H1 (cell line): ENCODE measurements at regions of chr2 and their contacts with region 1.

Region 1: GRCh38 chr2:126634273-126634861 is 21.6 kb upstream of the GYPC start:
- DNase-seq: peak in 1 of 2 experiments; percentile 53
- H3K4me3 ChIP-seq: no peak overlapping the region
- H3K27ac ChIP-seq: no peak overlapping the region
- H3K4me1 ChIP-seq: no peaks in the 10 kb centered on the region
- H3K27me3 ChIP-seq: no peaks in the 10 kb centered on the region; a peak in 1 of 7 replicates
- CTCF ChIP-seq: peak; percentile 31 to 60 (median 49)
- EP300 ChIP-seq: no peak
- POLR2A ChIP-seq: no peak
- RAD21 ChIP-seq: peak; percentile 37 to 55; a peak in 3 of 4 replicates

Region 2: GRCh38 chr2:126527836-126528507 is 106.4 kb before region 1 on chr2:
- CTCF ChIA-PET with region 1: interaction called, 19 read pairs
- POLR2A ChIA-PET with region 1: no interaction called
- DNase-seq: peak; percentile 39 to 79
- H3K4me3 ChIP-seq: no peak overlapping the region
- H3K27ac ChIP-seq: no peak overlapping the region
- H3K4me1 ChIP-seq: no peaks in the 10 kb centered on the region
- H3K27me3 ChIP-seq: no peaks in the 10 kb centered on the region
- CTCF ChIP-seq: peak; percentile 74 to 88 (median 85)
- EP300 ChIP-seq: no peak
- POLR2A ChIP-seq: no peak
- RAD21 ChIP-seq: peak; percentile 87 to 88

Region 3: GRCh38 chr2:126644630-126645191 is 10.3 kb after region 1 on chr2:
- CTCF ChIA-PET with region 1: interaction called, 16 read pairs
- POLR2A ChIA-PET with region 1: no interaction called
- DNase-seq: peak in 1 of 2 experiments; percentile 6
- H3K4me3 ChIP-seq: no peak overlapping the region
- H3K27ac ChIP-seq: no peak overlapping the region
- H3K4me1 ChIP-seq: peaks cover 0 to 5% (median 4%) of the 10 kb centered on the region in 4 experiments; a peak in 2 of 7 replicates
- H3K27me3 ChIP-seq: no peaks in the 10 kb centered on the region
- CTCF ChIP-seq: no peak
- EP300 ChIP-seq: no peak
- POLR2A ChIP-seq: no peak
- RAD21 ChIP-seq: no peak